Heart left ventricle (tissue), 16 donors: ENCODE measurements at regions of chr1 and their contacts with region 1.

Region 1: DNA sequence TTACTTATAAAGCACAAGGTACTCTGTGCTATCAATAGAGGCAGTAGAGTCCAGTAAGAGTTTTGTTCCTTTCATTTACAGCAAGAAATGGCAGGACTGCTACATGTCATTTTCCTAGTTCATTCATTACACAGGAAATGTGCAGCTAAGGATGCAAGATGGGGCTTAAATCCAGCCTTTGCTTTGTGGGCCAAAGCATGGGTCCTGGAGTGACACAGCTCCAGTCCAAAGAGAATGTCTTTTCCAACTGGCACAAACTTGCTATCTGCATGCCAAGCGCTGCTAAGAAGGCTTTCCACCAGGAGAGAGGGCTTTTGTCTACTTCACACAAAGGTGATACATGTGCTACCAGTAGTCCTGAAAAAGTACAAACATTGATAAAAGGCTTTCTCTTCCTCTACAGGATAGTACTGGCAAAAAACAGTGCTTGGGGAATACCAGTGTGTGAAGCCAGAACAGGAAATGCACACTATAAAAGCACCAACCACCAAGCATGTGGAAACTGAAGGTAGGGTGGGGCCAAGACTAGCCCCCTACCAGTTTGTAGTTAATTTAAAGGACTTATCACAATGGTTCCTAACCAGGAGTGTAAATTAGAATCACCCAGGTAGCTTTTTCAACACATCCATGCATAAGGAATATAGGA is 68.7 kb downstream of the ARID4B start:
- DNase-seq: no peak
- ATAC-seq: peak in 3 of 4 donors; percentile 41 to 70 (median 45)
- H3K4me3 ChIP-seq: no peak overlapping the region
- H3K27ac ChIP-seq: no peak overlapping the region
- H3K4me1 ChIP-seq: peaks cover 0 to 37% (median 10%) of the 10 kb centered on the region in 12 donors
- H3K27me3 ChIP-seq: no peaks in the 10 kb centered on the region
- CTCF ChIP-seq: no peak
- POLR2A ChIP-seq: no peak

Region 2: GRCh38 chr1:235317168-235317567 is 57.9 kb after region 1 on chr1:
- intact Hi-C with region 1: loop called in 2 of 10 experiments (anchors 5 to 10 kb)
- DNase-seq: no peak
- ATAC-seq: no peak
- H3K4me3 ChIP-seq: no peak overlapping the region
- H3K27ac ChIP-seq: peak overlapping the region in 1 of 12 donors; percentile 16
- H3K4me1 ChIP-seq: peaks cover 0 to 58% (median 31%) of the 10 kb centered on the region in 12 donors
- H3K27me3 ChIP-seq: no peaks in the 10 kb centered on the region
- CTCF ChIP-seq: no peak
- POLR2A ChIP-seq: no peak

Region 3: DNA sequence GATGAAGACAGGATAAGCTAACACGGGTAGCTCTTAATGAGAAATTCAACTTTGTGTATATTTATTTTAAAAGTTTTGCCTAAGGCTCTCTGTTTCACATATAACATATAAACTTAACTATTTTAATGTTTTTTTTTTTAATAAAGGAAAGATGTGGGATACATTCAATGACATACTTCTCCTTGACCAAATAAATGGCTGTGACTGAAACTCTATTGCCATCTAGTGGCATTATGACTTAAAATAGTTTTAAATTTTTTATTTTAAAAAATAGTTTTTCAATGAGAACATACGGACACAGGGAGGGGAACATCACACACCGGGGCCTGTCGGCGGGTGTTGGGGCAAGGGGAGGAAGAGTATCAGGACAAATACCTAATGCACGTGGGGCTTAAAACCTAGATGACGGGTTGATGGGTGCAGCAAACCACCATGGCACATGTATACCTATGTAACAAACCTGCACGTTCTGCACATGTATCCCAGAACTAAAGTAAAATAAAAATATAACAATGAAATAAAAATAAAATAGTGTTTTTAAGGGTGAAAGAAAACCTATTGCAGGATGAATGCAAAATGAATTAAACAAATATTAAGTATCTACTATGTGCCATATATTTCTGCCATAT is 524.0 kb after region 1 on chr1:
- intact Hi-C with region 1: no loop called
- DNase-seq: no peak
- ATAC-seq: no peak
- H3K4me3 ChIP-seq: no peak overlapping the region
- H3K27ac ChIP-seq: no peak overlapping the region
- H3K4me1 ChIP-seq: peaks cover 0 to 3% (median 0%) of the 10 kb centered on the region in 12 donors
- H3K27me3 ChIP-seq: no peaks in the 10 kb centered on the region
- CTCF ChIP-seq: peak; percentile 27 to 65 (median 54)
- POLR2A ChIP-seq: no peak